Cardiac septum (tissue), 1 donor: ENCODE measurements at regions of chr1 and their contacts with region 1.

Region 1: DNA sequence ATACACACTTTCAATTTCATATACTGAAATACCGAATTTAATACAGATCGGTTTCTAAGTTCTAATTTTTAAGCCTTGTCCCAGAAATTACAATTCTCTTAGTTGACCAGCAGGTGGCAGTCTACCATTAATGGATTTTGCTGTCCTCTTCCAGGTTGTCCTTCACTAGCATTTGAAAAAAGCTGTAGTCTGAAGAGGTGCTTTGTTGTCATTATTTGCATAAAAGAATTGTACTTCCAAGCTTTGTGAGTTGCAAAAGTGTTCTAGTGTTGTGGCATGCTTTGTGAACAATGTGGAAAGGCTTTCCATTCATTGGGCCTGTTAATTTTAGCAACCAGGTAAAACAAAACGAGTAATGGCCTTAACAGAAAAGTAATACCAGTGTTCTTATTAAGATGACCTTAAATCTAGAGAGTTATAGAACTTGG is 193.6 kb downstream of the RPS6KC1 start:
- DNase-seq: no peak

Region 2: DNA sequence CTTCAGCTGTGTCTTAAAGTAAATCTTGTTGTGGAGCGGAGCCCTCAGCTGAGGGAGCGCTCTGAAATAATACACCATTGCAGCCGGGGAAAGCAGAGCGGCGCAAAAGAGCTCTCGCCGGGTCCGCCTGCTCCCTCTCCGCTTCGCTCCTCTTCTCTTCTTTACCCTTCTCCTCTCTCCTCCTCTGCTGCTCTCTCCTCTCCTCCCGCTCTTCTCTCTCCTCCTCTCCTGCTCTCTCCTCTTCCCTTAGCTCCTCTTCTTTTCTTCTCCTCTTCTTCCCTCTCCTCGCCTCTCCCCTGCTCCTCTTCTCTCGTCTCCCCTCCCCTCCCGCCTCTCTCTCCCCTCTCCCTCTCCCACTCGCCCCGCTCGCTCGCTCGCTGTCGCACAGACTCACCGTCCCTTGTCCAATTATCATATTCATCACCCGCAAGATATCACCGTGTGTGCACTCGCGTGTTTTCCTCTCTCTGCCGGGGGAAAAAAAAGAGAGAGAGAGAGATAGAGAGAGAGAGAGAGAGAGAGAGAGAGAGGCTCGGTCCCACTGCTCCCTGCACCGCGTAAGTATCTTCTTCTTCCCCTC is 743.3 kb after region 1 on chr1 and contains the start of gene PROX1:
- intact Hi-C with region 1: loop called (anchors 10 kb)
- DNase-seq: no peak
- total RNA-seq, gene PROX1: 110 TPM